IMR-90 (cell line): ENCODE measurements at regions of chr1 and their contacts with region 1.

Region 1: DNA sequence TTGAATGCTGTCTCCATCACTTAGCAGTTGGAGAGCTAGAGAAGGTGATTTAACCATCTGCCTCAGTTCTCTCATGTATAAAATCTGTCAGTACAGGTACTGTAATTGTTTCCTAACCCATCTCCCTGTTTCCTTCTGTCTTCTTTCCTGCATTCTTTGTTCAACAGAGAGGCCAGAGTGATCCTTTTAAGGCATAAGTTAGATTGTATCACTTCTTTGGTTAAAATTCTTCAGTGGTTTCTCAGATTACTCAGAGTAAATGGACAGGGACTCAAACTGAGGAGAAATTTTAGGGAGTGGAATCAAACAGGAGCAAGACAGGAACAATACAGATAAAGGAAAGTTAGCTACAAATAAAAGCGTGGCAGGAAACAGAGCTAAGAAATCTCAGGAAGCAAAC is 45.2 kb upstream of the SSX2IP start:
- DNase-seq: peak; percentile 19
- ATAC-seq: peak; percentile 65; the same call in 1 of the 2 replicates
- H3K4me3 ChIP-seq: no peak overlapping the region
- H3K27ac ChIP-seq: no peak overlapping the region
- H3K4me1 ChIP-seq: 0 out of 2 replicates have a peak, but pooled peaks cover 2% of the 10 kb centered on the region
- H3K27me3 ChIP-seq: no peaks in the 10 kb centered on the region
- CTCF ChIP-seq: no peak
- POLR2A ChIP-seq: no peak
- RAD21 ChIP-seq: no peak

Region 2: GRCh38 chr1:84208935-84209334 is 526.5 kb before region 1 on chr1:
- CTCF ChIA-PET with region 1: no interaction called
- POLR2A ChIA-PET with region 1: no interaction called
- dilution Hi-C with region 1: no loop called
- in situ Hi-C with region 1: no loop called
- intact Hi-C with region 1: loop called (anchors 10 kb)
- DNase-seq: no peak
- ATAC-seq: no peak
- H3K4me3 ChIP-seq: no peak overlapping the region
- H3K27ac ChIP-seq: no peak overlapping the region
- H3K4me1 ChIP-seq: no peaks in the 10 kb centered on the region
- H3K27me3 ChIP-seq: no peaks in the 10 kb centered on the region
- CTCF ChIP-seq: no peak
- POLR2A ChIP-seq: no peak
- RAD21 ChIP-seq: no peak

Region 3: GRCh38 chr1:84853741-84854721 is 118.5 kb after region 1 on chr1:
- CTCF ChIA-PET with region 1: no interaction called
- POLR2A ChIA-PET with region 1: no interaction called
- dilution Hi-C with region 1: no loop called
- in situ Hi-C with region 1: no loop called
- intact Hi-C with region 1: no loop called
- DNase-seq: peak; percentile 85
- ATAC-seq: peak; percentile 35; the same call in 1 of the 2 replicates
- H3K4me3 ChIP-seq: no peak overlapping the region
- H3K27ac ChIP-seq: no peak overlapping the region
- H3K4me1 ChIP-seq: peaks cover 13% of the 10 kb centered on the region
- H3K27me3 ChIP-seq: no peaks in the 10 kb centered on the region
- CTCF ChIP-seq: no peak
- POLR2A ChIP-seq: no peak
- RAD21 ChIP-seq: no peak

Region 4: GRCh38 chr1:85283475-85284199 is 548.2 kb after region 1 on chr1:
- CTCF ChIA-PET with region 1: no interaction called
- POLR2A ChIA-PET with region 1: no interaction called
- dilution Hi-C with region 1: no loop called
- in situ Hi-C with region 1: no loop called
- intact Hi-C with region 1: no loop called
- DNase-seq: no peak
- ATAC-seq: no peak
- H3K4me3 ChIP-seq: no peak overlapping the region
- H3K27ac ChIP-seq: no peak overlapping the region
- H3K4me1 ChIP-seq: peaks cover 6% of the 10 kb centered on the region
- H3K27me3 ChIP-seq: no peaks in the 10 kb centered on the region
- CTCF ChIP-seq: no peak
- POLR2A ChIP-seq: no peak
- RAD21 ChIP-seq: no peak